CD4-positive, alpha-beta memory T cell (primary cell): ENCODE measurements at regions of chr6 and their contacts with region 1.

Region 1: DNA sequence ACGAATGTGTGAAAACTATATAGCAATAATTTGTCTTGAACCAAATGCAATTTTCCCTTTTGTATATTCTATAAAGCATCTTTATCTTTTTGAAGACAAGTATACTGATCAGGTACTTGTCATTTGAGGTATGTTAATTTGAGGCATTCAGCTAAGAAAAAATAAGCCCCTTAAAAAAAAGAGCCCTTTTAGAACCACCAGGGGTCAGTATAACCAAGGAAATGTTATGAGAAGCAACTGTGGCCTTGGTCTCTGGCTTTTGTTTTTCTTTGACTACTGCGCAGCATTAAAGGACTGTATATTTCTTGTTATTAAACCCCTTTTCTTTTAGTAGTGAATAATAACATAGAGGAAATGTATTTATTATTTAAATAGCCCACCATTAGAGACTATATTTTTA is 43.1 kb downstream of the CD109 start:
- DNase-seq: peak in 4 of 5 donors; percentile 51 to 59 (median 53)
- H3K4me3 ChIP-seq: no peak overlapping the region
- H3K4me3 Mint-ChIP-seq: no peak overlapping the region
- H3K27ac ChIP-seq: no peak overlapping the region
- H3K27ac Mint-ChIP-seq: no peak overlapping the region
- H3K4me1 ChIP-seq: no peaks in the 10 kb centered on the region
- H3K4me1 Mint-ChIP-seq: no peaks in the 10 kb centered on the region
- H3K27me3 ChIP-seq: no peaks in the 10 kb centered on the region
- H3K27me3 Mint-ChIP-seq: peaks cover 1% of the 10 kb centered on the region in 2 donors

Region 2: DNA sequence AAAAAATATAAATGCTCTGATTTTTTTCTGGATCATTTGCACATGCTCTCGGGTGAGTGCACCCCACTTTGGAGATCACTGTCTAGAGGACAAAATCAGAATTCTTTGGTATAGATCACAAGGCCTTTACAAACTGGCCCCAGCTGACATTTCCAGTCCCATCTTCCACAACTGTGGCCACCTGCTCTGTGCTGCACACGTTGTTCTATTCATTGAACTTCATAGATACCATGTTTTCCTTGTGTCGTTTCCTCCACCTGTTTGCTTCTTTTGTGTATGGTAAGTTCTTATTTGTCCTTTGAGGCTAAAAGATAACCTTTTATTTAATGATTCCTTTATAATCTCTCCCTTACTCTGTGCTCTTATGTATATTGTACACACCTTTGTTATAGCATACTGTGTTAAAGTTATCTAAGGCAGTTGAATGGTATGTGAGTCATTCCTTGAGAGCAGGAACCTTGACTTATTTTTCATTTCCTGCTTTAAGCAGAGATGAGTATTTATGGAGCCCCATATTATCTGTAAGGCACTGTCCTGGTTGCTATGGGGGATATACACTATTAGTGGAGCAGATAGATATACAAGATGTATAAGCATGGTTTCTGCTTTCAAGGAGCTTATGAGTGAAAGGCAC is 73.3 kb before region 1 on chr6:
- CTCF ChIA-PET with region 1: no interaction called
- POLR2A ChIA-PET with region 1: no interaction called
- intact Hi-C with region 1: no loop called
- DNase-seq: no peak
- H3K4me3 ChIP-seq: no peak overlapping the region
- H3K4me3 Mint-ChIP-seq: no peak overlapping the region
- H3K27ac ChIP-seq: no peak overlapping the region
- H3K27ac Mint-ChIP-seq: no peak overlapping the region
- H3K4me1 ChIP-seq: no peaks in the 10 kb centered on the region
- H3K4me1 Mint-ChIP-seq: no peaks in the 10 kb centered on the region
- H3K27me3 ChIP-seq: no peaks in the 10 kb centered on the region
- H3K27me3 Mint-ChIP-seq: peaks cover 11 to 23% of the 10 kb centered on the region in 2 donors

Region 3: GRCh38 chr6:73854998-73855718 is 116.1 kb after region 1 on chr6:
- CTCF ChIA-PET with region 1: interaction called, 6 read pairs
- POLR2A ChIA-PET with region 1: no interaction called
- intact Hi-C with region 1: loop called (anchors 1 kb)
- DNase-seq: peak; percentile 36 to 49 (median 47)
- H3K4me3 ChIP-seq: no peak overlapping the region
- H3K4me3 Mint-ChIP-seq: no peak overlapping the region
- H3K27ac ChIP-seq: no peak overlapping the region
- H3K27ac Mint-ChIP-seq: peak overlapping the region in 1 of 7 donors; percentile 29
- H3K4me1 ChIP-seq: no peaks in the 10 kb centered on the region
- H3K4me1 Mint-ChIP-seq: peaks cover 0 to 2% (median 0%) of the 10 kb centered on the region in 4 donors
- H3K27me3 ChIP-seq: no peaks in the 10 kb centered on the region
- H3K27me3 Mint-ChIP-seq: no peaks in the 10 kb centered on the region

Region 4: GRCh38 chr6:74091136-74091793 is 352.2 kb after region 1 on chr6:
- CTCF ChIA-PET with region 1: interaction called, 4 read pairs
- POLR2A ChIA-PET with region 1: no interaction called
- intact Hi-C with region 1: loop called (anchors 2 kb)
- DNase-seq: peak in 2 of 5 donors; percentile 7 to 14
- H3K4me3 ChIP-seq: no peak overlapping the region
- H3K4me3 Mint-ChIP-seq: no peak overlapping the region
- H3K27ac ChIP-seq: no peak overlapping the region
- H3K27ac Mint-ChIP-seq: no peak overlapping the region
- H3K4me1 ChIP-seq: no peaks in the 10 kb centered on the region
- H3K4me1 Mint-ChIP-seq: no peaks in the 10 kb centered on the region
- H3K27me3 ChIP-seq: no peaks in the 10 kb centered on the region
- H3K27me3 Mint-ChIP-seq: peaks cover 1 to 8% of the 10 kb centered on the region in 2 donors